Endothelial cell of umbilical vein (primary cell): ENCODE measurements at regions of chr9 and their contacts with region 1.

Region 1: GRCh38 chr9:86202338-86202882 is 57.0 kb downstream of the C9orf153 start:
- DNase-seq: peak; percentile 54
- H3K4me3 ChIP-seq: no peak overlapping the region
- H3K27ac ChIP-seq: no peak overlapping the region
- H3K4me1 ChIP-seq: no peaks in the 10 kb centered on the region
- H3K27me3 ChIP-seq: peaks cover 0 to 1% of the 10 kb centered on the region in 2 experiments
- CTCF ChIP-seq: peak; percentile 71 to 73
- POLR2A ChIP-seq: no peak

Region 2: DNA sequence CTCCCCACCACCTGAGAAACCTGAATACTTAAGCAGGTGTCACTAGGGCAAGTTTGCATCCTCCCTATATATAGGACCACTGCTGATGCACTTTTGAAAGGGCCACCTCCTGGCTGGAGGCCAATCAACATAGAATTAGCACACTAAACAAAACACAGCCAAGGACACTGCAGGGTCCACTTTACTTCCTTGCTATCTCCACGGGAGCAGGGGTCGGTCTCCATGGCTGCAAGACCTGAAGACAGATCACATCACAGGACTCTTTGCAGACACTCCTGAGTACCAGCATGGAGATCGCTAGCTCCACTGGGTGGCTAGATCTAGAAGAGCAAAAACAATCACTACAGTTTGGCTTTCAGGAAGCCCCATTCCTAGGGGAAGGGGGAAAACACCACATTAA is 15.3 kb before region 1 on chr9:
- CTCF ChIA-PET with region 1: interaction called, 10 read pairs
- POLR2A ChIA-PET with region 1: no interaction called
- dilution Hi-C with region 1: no loop called
- intact Hi-C with region 1: no loop called
- DNase-seq: no peak
- H3K4me3 ChIP-seq: no peak overlapping the region
- H3K27ac ChIP-seq: no peak overlapping the region
- H3K4me1 ChIP-seq: no peaks in the 10 kb centered on the region
- H3K27me3 ChIP-seq: no peaks in the 10 kb centered on the region
- CTCF ChIP-seq: no peak
- POLR2A ChIP-seq: no peak

Region 3: GRCh38 chr9:86217076-86217755 is 14.8 kb after region 1 on chr9:
- CTCF ChIA-PET with region 1: interaction called, 20 read pairs
- POLR2A ChIA-PET with region 1: no interaction called
- dilution Hi-C with region 1: no loop called
- intact Hi-C with region 1: no loop called
- DNase-seq: no peak
- H3K4me3 ChIP-seq: no peak overlapping the region
- H3K27ac ChIP-seq: no peak overlapping the region
- H3K4me1 ChIP-seq: no peaks in the 10 kb centered on the region
- H3K27me3 ChIP-seq: no peaks in the 10 kb centered on the region
- CTCF ChIP-seq: no peak
- POLR2A ChIP-seq: no peak

Region 4: GRCh38 chr9:86238861-86239770 is 36.7 kb after region 1 on chr9:
- CTCF ChIA-PET with region 1: interaction called, 20 read pairs
- POLR2A ChIA-PET with region 1: no interaction called
- dilution Hi-C with region 1: no loop called
- intact Hi-C with region 1: no loop called
- DNase-seq: peak; percentile 20
- H3K4me3 ChIP-seq: no peak overlapping the region
- H3K27ac ChIP-seq: no peak overlapping the region
- H3K4me1 ChIP-seq: peaks cover 4% of the 10 kb centered on the region
- H3K27me3 ChIP-seq: no peaks in the 10 kb centered on the region
- CTCF ChIP-seq: no peak
- POLR2A ChIP-seq: no peak

Region 5: DNA sequence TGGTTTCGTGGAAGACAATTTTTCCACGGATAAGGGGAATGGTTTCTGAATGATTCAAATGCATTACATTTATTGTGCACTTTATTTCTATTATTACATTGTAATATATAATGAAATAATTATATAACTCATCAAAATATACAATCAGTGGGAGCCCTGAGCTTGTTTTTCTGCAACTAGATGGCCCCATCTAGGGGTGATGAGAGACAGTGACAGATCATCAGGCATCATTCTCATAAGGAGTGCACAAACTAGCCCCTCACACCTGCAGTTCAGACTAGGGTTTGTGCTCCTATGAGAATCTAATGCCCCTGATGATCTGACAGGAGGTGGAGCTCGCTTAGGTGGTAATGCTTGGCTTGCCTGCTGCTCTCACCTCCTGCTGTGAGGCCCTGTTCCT is 73.6 kb after region 1 on chr9:
- CTCF ChIA-PET with region 1: interaction called, 22 read pairs
- POLR2A ChIA-PET with region 1: no interaction called
- dilution Hi-C with region 1: no loop called
- intact Hi-C with region 1: loop called (anchors 2 kb)
- DNase-seq: no peak
- H3K4me3 ChIP-seq: no peak overlapping the region
- H3K27ac ChIP-seq: no peak overlapping the region
- H3K4me1 ChIP-seq: peaks cover 2% of the 10 kb centered on the region
- H3K27me3 ChIP-seq: no peaks in the 10 kb centered on the region
- CTCF ChIP-seq: no peak
- POLR2A ChIP-seq: no peak